Ovary (tissue), 10 donors: ENCODE measurements at regions of chr9 and their contacts with region 1.

Region 1: DNA sequence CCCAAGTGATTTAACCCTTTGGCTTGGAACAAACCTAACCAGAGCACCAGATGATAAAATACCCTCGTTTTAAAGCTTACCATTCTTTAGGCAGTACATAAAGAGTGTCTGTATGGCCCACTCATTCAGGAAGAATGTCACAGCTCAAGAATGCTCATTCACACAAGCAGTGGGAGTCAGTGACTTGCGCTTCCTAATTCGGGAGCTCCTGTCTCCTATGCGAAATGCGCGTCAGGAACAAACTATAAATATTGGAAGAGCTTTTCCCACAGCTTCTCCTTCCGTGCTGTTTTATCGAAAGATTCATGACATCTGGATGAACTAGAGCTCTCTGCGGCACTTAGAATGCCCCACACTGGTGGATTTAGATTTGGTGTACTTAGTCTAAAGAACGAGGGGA is 66.6 kb downstream of the NTRK2 start:
- DNase-seq: no peak
- H3K4me3 ChIP-seq: no peak overlapping the region
- H3K27ac ChIP-seq: no peak overlapping the region
- H3K4me1 ChIP-seq: no peaks in the 10 kb centered on the region
- H3K27me3 ChIP-seq: no peaks in the 10 kb centered on the region
- CTCF ChIP-seq: no peak
- EP300 ChIP-seq: no peak
- POLR2A ChIP-seq: no peak

Region 2: DNA sequence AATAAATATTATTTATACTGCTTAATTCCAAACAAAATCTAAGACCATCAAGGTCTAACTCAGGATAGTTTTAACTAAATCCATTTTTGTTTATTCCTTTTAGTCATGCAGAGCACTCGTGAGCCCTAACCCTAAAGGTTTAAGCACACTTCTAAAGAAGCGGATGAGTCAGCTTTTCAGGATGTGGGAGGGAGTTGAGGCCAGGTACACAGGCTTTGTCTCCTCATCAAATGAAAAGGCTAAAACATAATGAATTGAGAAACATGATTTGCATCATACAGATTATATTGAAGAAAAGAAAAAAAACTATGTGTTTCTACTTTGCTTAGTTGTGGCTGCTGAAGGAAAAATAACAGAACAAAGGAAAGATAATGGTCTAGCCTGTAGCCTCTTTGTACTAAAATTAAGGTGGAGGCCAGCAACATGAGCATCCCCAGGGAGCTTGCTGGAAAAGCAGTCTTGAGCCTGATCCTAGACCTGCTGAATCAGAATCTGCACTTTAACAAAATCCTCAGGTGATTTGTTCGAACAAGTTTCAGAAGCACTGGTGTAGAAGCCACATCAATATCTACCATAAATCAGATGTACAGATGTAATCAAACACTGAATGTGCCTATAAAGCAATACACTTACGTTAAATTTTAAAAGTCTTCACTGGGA is 1567.4 kb after region 1 on chr9:
- intact Hi-C with region 1: loop called in 1 of 4 experiments (anchors 5 kb)
- DNase-seq: no peak
- H3K4me3 ChIP-seq: no peak overlapping the region
- H3K27ac ChIP-seq: peak overlapping the region in 1 of 2 donors; percentile 19
- H3K4me1 ChIP-seq: peaks cover 2% of the 10 kb centered on the region
- H3K27me3 ChIP-seq: no peaks in the 10 kb centered on the region
- CTCF ChIP-seq: no peak
- EP300 ChIP-seq: no peak
- POLR2A ChIP-seq: no peak